Mucosa of descending colon (tissue), 3 donors: ENCODE measurements at regions of chr17 and their contacts with region 1.

Region 1: GRCh38 chr17:34199932-34200534 is 55.1 kb upstream of the CCL2 start:
- DNase-seq: peak in 2 of 3 donors; percentile 37 to 86
- ATAC-seq: peak; percentile 95
- H3K4me3 ChIP-seq: no peak overlapping the region
- H3K4me1 ChIP-seq: no peaks in the 10 kb centered on the region
- CTCF ChIP-seq: peak; percentile 96

Region 2: DNA sequence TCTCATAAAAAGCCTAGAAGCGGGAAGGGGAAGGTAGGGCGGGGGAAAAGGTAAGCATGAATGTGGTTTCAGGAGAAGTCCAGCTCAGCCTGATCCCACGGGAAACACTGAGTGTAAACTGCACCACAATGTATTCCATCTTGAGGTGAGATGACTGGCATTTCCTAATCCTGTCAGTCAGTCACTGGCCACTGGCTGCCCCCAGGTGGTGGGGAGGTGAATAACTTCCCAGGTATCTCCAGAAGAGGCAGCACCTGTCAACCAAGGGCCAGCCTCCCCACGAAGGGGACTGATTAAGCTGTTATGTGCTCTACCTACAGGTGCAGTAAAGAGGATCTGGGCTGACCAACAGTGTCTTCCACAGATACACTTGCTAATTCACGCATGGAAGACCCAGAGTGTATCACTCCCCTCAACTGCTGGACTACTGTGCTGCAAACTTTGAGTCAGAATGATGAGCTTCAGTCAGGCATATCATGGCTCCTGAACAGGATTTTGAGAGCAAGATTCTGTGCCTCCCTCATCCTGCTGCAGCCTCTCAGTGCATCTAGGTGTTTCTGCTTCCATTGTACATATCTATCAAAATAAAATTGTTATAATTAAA is 53.5 kb before region 1 on chr17:
- intact Hi-C with region 1: no loop called
- DNase-seq: peak in 2 of 3 donors; percentile 79 to 81
- ATAC-seq: peak; percentile 75
- H3K4me3 ChIP-seq: no peak overlapping the region
- H3K4me1 ChIP-seq: no peaks in the 10 kb centered on the region
- CTCF ChIP-seq: peak; percentile 43

Region 3: DNA sequence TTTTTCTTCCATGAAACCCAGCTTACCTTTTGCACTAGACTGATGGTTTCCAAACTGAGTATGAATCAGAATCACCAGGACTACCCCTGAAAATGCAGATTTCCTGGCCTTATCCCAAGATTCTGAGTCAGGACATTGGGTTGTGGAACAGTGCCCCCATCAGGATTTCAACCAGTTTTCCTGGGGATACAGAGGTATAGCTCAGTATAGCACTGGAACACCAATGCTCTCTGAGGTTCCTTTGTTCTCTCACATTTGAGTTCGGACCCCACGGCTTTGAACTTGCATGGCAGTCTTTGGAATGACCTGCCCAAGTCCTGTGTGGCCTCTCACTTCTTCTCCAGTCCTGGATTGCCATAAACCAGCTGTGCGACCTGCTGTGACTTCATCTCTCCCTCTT is 106.4 kb after region 1 on chr17:
- intact Hi-C with region 1: loop called (anchors 10 kb)
- DNase-seq: no peak
- ATAC-seq: peak; percentile 35
- H3K4me3 ChIP-seq: no peak overlapping the region
- H3K4me1 ChIP-seq: no peaks in the 10 kb centered on the region
- CTCF ChIP-seq: no peak

Region 4: DNA sequence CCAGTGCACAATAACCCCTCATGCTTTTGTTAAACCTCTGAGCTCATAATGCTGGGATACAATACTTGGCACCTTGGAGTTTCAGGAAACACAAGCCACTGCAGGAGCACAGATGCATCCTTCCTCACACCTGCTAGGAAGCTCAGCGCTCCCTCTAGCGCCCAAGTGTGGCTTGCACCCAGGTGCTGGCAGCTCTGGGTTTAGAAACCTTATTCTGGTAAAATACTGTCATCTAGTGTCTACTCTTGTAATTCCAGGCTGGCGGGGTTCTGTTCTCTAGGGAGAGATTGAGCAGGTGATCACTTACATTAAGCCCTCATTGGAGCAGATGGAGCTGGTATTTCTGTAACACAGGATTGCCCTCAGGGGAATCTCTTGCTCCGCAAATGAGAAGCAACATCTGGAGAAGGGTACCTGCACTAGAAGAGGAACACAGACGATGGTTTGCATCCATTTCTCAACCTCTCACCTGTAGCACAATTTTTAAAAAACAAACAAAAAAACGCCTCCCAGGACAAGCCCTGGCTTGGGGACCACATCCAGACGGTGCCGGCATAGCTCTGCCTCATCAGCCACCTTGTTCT is 161.5 kb after region 1 on chr17:
- intact Hi-C with region 1: loop called (anchors 2 to 5 kb)
- DNase-seq: peak; percentile 86 to 96 (median 91)
- ATAC-seq: peak; percentile 97
- H3K4me3 ChIP-seq: no peak overlapping the region
- H3K4me1 ChIP-seq: no peaks in the 10 kb centered on the region
- CTCF ChIP-seq: peak; percentile 87